Activated naive CD4-positive, alpha-beta T cell treated with anti-CD3 and anti-CD28 coated beads for 36 hours (primary cell): ENCODE measurements at regions of chr9 and their contacts with region 1.

Region 1: GRCh38 chr9:87336914-87337333 is 160.7 kb upstream of the DAPK1 start:
- DNase-seq: peak; percentile 28
- H3K4me3 Mint-ChIP-seq: peak overlapping the region; percentile 62
- H3K27ac Mint-ChIP-seq: no peak overlapping the region
- H3K4me1 Mint-ChIP-seq: peaks cover 10% of the 10 kb centered on the region
- H3K27me3 Mint-ChIP-seq: peaks cover 43% of the 10 kb centered on the region

Region 2: GRCh38 chr9:87640385-87640795 is 303.5 kb after region 1 on chr9:
- CTCF ChIA-PET with region 1: no interaction called
- intact Hi-C with region 1: loop called (anchors 5 kb)
- DNase-seq: no peak
- H3K4me3 Mint-ChIP-seq: no peak overlapping the region
- H3K27ac Mint-ChIP-seq: no peak overlapping the region
- H3K4me1 Mint-ChIP-seq: peaks cover 3% of the 10 kb centered on the region
- H3K27me3 Mint-ChIP-seq: no peaks in the 10 kb centered on the region